Astrocyte of the cerebellum (primary cell): ENCODE measurements at regions of chr3 and their contacts with region 1.

Region 1: DNA sequence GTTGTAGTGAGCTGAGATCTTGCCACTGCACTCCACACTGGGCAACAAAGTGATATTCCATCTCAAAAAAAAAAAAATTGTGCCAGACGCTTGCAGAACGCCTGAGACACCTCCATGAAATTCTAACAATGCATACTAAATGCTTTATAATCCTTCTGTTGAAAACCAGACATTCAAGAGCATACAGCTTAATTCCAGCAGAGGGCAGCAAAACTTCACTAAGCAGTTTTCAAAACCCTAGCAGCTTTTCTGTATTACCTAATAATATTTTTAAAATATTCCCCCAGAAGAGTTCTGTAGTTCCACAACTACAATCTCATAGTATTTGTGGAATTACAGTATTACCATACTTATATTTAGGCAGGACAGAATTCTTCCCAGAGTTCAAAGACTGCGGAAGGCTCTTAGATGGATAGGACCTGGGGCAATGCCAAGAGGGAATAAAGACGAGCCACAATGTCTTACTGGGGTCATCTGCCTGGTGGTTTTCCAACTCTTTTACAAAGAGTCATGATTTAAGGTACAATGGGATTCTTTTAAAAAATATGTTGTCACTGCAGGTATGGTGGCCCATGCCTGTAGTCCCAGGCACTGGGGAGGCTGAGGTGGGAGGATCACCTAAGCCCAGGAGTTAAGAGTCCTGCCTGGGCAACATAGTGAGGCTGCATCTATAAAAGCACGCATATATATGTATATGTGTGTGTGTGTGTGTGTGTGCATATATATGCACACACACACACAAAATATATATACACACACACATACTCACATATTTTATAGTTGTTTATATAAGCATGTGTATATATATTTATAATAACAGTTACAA is 19.6 kb upstream of the TASOR start:
- DNase-seq: peak; percentile 76
- H3K4me3 ChIP-seq: no peak overlapping the region
- CTCF ChIP-seq: peak; percentile 72

Region 2: GRCh38 chr3:56025326-56025725 is 677.4 kb before region 1 on chr3:
- in situ Hi-C with region 1: no loop called
- DNase-seq: no peak
- H3K4me3 ChIP-seq: no peak overlapping the region
- CTCF ChIP-seq: no peak

Region 3: DNA sequence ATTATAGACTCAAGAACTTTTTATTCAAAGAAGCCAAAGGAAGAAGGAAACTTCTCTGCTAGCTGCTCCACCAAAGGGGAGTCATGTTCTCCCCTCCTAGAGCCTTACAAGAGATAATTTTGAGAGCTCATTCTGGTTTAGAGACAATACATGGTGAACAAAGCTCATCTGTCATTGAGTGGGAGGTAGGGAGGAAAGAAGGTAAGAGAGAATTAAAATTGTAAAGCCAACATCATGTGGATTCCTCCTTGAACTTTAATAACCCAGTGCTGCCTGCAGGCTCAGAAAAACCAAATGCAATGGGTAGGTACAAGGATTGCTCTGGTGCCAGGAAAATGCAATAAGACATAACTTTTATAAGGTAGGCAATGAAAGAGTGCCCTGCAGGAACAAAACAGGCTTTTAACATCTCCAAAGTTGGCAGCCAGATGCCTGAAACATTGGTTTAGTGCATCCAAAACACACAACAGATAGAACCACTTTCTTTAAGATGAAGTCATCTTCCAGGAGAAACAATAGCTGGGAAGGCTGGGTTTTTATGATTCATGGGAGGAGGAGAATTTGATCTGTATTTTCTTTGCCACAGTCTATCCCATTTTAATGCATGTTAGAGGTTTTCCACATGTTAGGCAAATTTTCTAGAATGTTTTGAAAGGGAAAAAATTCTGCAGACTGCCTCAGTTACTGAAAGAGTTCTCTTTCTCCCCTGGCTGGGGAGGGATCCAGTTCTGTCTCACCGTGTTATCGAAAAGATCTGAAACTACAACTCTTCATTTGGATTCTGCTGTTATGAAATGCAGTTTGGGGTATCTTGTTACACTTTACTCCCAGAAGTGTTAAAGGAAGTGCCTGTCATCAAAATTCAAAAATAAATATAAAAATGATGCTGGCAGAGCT is 110.3 kb after region 1 on chr3:
- in situ Hi-C with region 1: no loop called
- DNase-seq: peak; percentile 36
- H3K4me3 ChIP-seq: no peak overlapping the region
- CTCF ChIP-seq: no peak

Region 4: DNA sequence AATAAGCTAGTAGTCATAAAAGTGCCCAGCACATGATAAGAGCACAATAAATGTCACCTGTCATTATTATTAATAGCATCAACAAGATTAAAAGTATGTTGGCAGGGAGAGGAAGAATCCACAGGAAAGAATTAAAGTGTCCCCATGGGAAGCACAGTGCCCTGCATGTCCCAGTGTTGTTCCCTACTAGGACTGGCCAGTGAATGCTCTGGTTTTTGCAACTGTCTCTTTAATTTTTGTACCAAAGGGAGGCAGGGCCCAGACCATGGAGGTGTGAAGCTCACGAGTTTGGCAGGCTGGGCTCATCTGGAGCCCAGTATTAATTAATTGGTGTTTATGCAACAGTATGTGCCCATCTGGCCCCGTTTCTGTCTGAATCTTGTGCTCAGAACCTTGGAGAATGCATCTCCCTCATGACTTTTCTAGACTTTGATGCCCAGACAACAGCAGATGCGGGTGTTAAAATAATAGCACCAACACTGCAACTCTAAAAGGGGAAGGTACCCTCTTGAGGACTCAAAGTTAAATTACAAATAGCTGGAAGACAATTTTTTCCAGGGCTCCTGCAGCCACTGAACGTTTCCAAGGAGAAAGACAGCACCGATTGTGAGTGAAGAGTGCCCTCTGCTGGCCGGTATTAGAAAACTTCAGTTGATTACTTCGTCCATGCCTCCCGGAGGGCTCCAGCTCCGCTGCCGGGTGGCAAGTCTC is 285.9 kb after region 1 on chr3:
- in situ Hi-C with region 1: loop called (anchors 25 kb)
- DNase-seq: peak; percentile 79
- H3K4me3 ChIP-seq: no peak overlapping the region
- CTCF ChIP-seq: peak; percentile 67

Region 5: DNA sequence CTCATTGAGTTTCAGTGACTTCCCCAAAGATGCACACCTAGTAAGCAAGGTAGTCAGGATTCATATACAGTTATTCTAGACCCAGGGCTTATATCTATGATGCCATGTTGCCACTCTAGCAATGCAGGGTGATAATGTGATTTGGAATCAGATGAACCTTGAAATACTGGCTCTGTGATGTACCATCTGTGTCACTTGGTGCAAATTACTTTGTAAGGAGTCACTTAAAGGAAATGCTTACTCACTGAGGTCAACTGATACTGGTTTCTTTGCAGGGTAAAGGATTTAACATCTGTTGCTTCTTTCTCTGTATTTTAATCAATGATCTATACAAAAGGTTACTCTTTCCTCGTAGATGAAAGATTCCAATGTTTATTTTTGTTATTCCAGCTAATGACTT is 579.0 kb after region 1 on chr3:
- in situ Hi-C with region 1: no loop called
- DNase-seq: no peak
- H3K4me3 ChIP-seq: no peak overlapping the region
- CTCF ChIP-seq: no peak